AG04450 (cell line): ENCODE measurements at regions of chr3 and their contacts with region 1.

Region 1: DNA sequence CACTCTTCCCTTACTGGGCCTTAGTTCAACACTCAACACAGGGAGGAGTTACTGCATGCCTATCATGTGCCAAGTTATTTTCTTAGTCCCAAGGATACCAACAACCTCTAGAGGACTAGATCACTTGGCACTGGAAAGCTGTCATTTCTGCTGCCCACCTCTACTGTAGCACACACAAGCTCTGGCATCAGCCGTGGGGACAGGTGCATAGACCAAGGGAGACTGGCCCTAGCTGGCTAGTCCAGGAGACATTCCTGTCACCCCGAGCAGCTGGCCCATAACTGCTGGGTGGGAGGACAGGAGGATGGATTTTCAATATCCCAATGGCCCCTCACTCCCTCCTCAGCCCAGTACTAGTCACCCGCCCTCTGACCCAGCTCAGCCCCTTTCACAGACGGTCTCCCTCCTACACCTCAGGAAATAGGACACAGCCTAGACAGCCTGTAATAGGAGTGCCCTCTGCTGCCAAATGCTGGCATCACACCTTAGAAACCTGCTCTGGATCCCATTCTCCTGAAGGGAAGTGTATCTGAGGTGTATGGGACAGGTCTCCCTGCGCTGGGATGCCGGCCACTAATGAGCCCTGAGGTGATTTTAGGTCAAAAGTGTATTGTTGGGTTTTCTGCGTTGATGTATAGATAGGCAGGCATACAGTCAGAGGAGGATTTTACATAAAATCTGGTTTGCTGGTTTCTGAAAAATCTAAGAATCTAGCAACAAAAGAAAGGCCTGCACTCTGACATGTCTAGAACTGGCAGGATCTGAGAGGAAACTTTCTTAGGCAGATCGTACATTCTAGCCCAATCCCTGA is 3.4 kb upstream of the DZIP1L start:
- DNase-seq: peak; percentile 29
- H3K4me3 ChIP-seq: no peak overlapping the region
- H3K27ac ChIP-seq: no peak overlapping the region
- H3K27me3 ChIP-seq: no peaks in the 10 kb centered on the region
- CTCF ChIP-seq: peak; percentile 88

Region 2: GRCh38 chr3:137845194-137845593 is 273.6 kb before region 1 on chr3:
- CTCF ChIA-PET with region 1: no interaction called
- POLR2A ChIA-PET with region 1: no interaction called
- DNase-seq: no peak
- H3K4me3 ChIP-seq: no peak overlapping the region
- H3K27ac ChIP-seq: no peak overlapping the region
- H3K27me3 ChIP-seq: no peaks in the 10 kb centered on the region
- CTCF ChIP-seq: no peak

Region 3: GRCh38 chr3:137924628-137925027 is 194.2 kb before region 1 on chr3:
- CTCF ChIA-PET with region 1: no interaction called
- POLR2A ChIA-PET with region 1: no interaction called
- DNase-seq: no peak
- H3K4me3 ChIP-seq: no peak overlapping the region
- H3K27ac ChIP-seq: no peak overlapping the region
- H3K27me3 ChIP-seq: no peaks in the 10 kb centered on the region
- CTCF ChIP-seq: no peak

Region 4: GRCh38 chr3:138060792-138061191 is 58.0 kb before region 1 on chr3:
- CTCF ChIA-PET with region 1: interaction called, 202 read pairs
- POLR2A ChIA-PET with region 1: interaction called, 3 read pairs
- DNase-seq: no peak
- H3K4me3 ChIP-seq: no peak overlapping the region
- H3K27ac ChIP-seq: no peak overlapping the region
- H3K27me3 ChIP-seq: no peaks in the 10 kb centered on the region
- CTCF ChIP-seq: no peak

Region 5: GRCh38 chr3:138082085-138082991 is 36.5 kb before region 1 on chr3:
- CTCF ChIA-PET with region 1: interaction called, 28 read pairs
- POLR2A ChIA-PET with region 1: interaction called, 20 read pairs
- DNase-seq: peak; percentile 65
- H3K4me3 ChIP-seq: peak overlapping the region; percentile 38
- H3K27ac ChIP-seq: peak overlapping the region; percentile 95
- H3K27me3 ChIP-seq: no peaks in the 10 kb centered on the region
- CTCF ChIP-seq: no peak

Region 6: GRCh38 chr3:138108099-138108498 is 10.7 kb before region 1 on chr3:
- CTCF ChIA-PET with region 1: interaction called, 11 read pairs
- POLR2A ChIA-PET with region 1: no interaction called
- DNase-seq: no peak
- H3K4me3 ChIP-seq: no peak overlapping the region
- H3K27ac ChIP-seq: no peak overlapping the region
- H3K27me3 ChIP-seq: no peaks in the 10 kb centered on the region
- CTCF ChIP-seq: no peak

Region 7: GRCh38 chr3:138174421-138175122 is 55.8 kb after region 1 on chr3 and contains the start of gene DBR1:
- CTCF ChIA-PET with region 1: interaction called, 13 read pairs
- POLR2A ChIA-PET with region 1: interaction called, 4 read pairs
- DNase-seq: peak; percentile 61
- H3K4me3 ChIP-seq: peak within 1 kb of the TSS; percentile 92
- H3K27ac ChIP-seq: peak within 1 kb of the TSS; percentile 55
- H3K27me3 ChIP-seq: no peaks in the 10 kb centered on the region
- CTCF ChIP-seq: no peak
- polyA plus RNA-seq, gene DBR1: 10.5 and 12.8 TPM in 2 replicates

Region 8: GRCh38 chr3:138284957-138285477 is 166.2 kb after region 1 on chr3:
- CTCF ChIA-PET with region 1: no interaction called
- POLR2A ChIA-PET with region 1: no interaction called
- DNase-seq: no peak
- H3K4me3 ChIP-seq: no peak overlapping the region
- H3K27ac ChIP-seq: no peak overlapping the region
- H3K27me3 ChIP-seq: no peaks in the 10 kb centered on the region
- CTCF ChIP-seq: 0 out of 2 replicates have a peak, but pooled peaks have one; percentile 22